CD4-positive, alpha-beta memory T cell (primary cell): ENCODE measurements at regions of chr7 and their contacts with region 1.

Region 1: GRCh38 chr7:87876040-87876868 is at the starts of genes DBF4 and SLC25A40:
- DNase-seq: peak; percentile 91 to 96 (median 95)
- H3K4me3 ChIP-seq: peak within 1 kb of the TSS; percentile 79 to 80
- H3K4me3 Mint-ChIP-seq: peak within 1 kb of the TSS; percentile 93 to 97 (median 95)
- H3K27ac ChIP-seq: peak within 1 kb of the TSS; percentile 91
- H3K27ac Mint-ChIP-seq: peak within 1 kb of the TSS; percentile 71 to 99 (median 97)
- H3K4me1 ChIP-seq: peaks cover 43% of the 10 kb centered on the region
- H3K4me1 Mint-ChIP-seq: peaks cover 37 to 58% (median 46%) of the 10 kb centered on the region in 4 donors
- H3K27me3 ChIP-seq: no peaks in the 10 kb centered on the region
- H3K27me3 Mint-ChIP-seq: no peaks in the 10 kb centered on the region
- total RNA-seq, gene DBF4: 25.3 to 29.0 TPM
- total RNA-seq, gene SLC25A40: 28.9 to 29.8 TPM

Region 2: GRCh38 chr7:87628780-87629569 is 247.3 kb before region 1 on chr7:
- CTCF ChIA-PET with region 1: no interaction called
- POLR2A ChIA-PET with region 1: no interaction called
- intact Hi-C with region 1: loop called (anchors 1 kb)
- DNase-seq: peak; percentile 17 to 51 (median 28)
- H3K4me3 ChIP-seq: peak overlapping the region in 1 of 2 donors; percentile 73
- H3K4me3 Mint-ChIP-seq: peak overlapping the region; percentile 75 to 93 (median 83)
- H3K27ac ChIP-seq: no peak overlapping the region
- H3K27ac Mint-ChIP-seq: peak overlapping the region in 4 of 7 donors; percentile 7 to 90 (median 41)
- H3K4me1 ChIP-seq: peaks cover 14% of the 10 kb centered on the region
- H3K4me1 Mint-ChIP-seq: peaks cover 7 to 16% (median 12%) of the 10 kb centered on the region in 4 donors
- H3K27me3 ChIP-seq: no peaks in the 10 kb centered on the region
- H3K27me3 Mint-ChIP-seq: peaks cover 6% of the 10 kb centered on the region in 2 donors

Region 3: DNA sequence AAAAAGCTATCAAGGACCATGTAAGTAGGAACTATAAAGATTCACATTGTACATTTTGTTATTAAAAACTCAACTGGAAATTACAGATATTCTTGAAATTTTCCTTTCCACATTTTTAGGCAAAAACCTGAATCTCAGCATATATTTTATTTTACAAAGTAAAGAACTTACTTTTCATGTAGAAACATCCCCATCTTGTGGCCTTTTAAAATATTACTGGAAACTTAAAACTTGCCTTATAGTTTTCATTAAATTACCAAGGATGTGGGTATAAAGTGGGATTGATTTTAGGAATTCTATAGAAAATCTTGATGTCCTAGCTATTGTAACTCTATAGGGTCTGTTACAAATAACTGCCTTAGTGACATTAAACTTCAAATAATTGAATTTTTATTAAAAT is 10.6 kb after region 1 on chr7:
- CTCF ChIA-PET with region 1: interaction called, 10 read pairs
- POLR2A ChIA-PET with region 1: no interaction called
- intact Hi-C with region 1: no loop called
- DNase-seq: peak in 4 of 5 donors; percentile 41 to 50 (median 44)
- H3K4me3 ChIP-seq: no peak overlapping the region
- H3K4me3 Mint-ChIP-seq: no peak overlapping the region
- H3K27ac ChIP-seq: no peak overlapping the region
- H3K27ac Mint-ChIP-seq: no peak overlapping the region
- H3K4me1 ChIP-seq: no peaks in the 10 kb centered on the region
- H3K4me1 Mint-ChIP-seq: peaks cover 0 to 14% (median 11%) of the 10 kb centered on the region in 4 donors
- H3K27me3 ChIP-seq: no peaks in the 10 kb centered on the region
- H3K27me3 Mint-ChIP-seq: no peaks in the 10 kb centered on the region

Region 4: DNA sequence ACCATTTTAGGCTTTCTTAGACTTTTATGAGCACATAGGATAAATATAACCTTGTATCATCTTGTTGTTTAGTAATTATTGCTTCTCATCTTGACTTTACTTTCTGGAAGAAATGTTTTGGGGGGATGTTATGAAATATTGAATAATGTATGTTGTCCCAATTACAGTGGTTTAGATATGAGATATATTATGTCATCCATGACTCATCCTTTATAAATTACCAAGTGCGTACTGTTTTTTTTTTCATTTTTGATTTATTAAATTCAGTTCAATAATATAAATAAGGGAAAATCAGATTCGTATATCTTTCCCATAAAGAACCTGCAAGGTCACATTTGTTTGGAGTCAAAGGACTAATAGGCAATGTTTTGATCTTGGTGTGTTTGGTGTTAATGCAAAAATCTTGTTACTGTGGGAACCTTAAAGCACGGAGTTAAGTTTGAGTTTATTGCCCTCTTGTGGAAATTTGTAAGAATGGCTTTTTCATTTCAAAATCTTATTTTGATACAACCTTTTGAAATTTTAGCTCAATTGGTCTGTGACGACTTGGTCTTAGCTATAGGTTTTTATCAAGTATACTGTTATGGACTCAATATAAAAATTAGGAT is 235.0 kb after region 1 on chr7:
- CTCF ChIA-PET with region 1: no interaction called
- POLR2A ChIA-PET with region 1: no interaction called
- intact Hi-C with region 1: loop called (anchors 5 kb)
- DNase-seq: peak in 4 of 5 donors; percentile 16 to 26 (median 24)
- H3K4me3 ChIP-seq: no peak overlapping the region
- H3K4me3 Mint-ChIP-seq: no peak overlapping the region
- H3K27ac ChIP-seq: no peak overlapping the region
- H3K27ac Mint-ChIP-seq: no peak overlapping the region
- H3K4me1 ChIP-seq: no peaks in the 10 kb centered on the region
- H3K4me1 Mint-ChIP-seq: peaks cover 0 to 1% (median 0%) of the 10 kb centered on the region in 4 donors
- H3K27me3 ChIP-seq: no peaks in the 10 kb centered on the region
- H3K27me3 Mint-ChIP-seq: no peaks in the 10 kb centered on the region

Region 5: GRCh38 chr7:88357294-88357693 is 481.0 kb after region 1 on chr7:
- CTCF ChIA-PET with region 1: no interaction called
- POLR2A ChIA-PET with region 1: no interaction called
- intact Hi-C with region 1: no loop called
- DNase-seq: no peak
- H3K4me3 ChIP-seq: no peak overlapping the region
- H3K4me3 Mint-ChIP-seq: no peak overlapping the region
- H3K27ac ChIP-seq: no peak overlapping the region
- H3K27ac Mint-ChIP-seq: no peak overlapping the region
- H3K4me1 ChIP-seq: no peaks in the 10 kb centered on the region
- H3K4me1 Mint-ChIP-seq: peaks cover 0 to 4% (median under 1%) of the 10 kb centered on the region in 4 donors
- H3K27me3 ChIP-seq: no peaks in the 10 kb centered on the region
- H3K27me3 Mint-ChIP-seq: no peaks in the 10 kb centered on the region

Region 6: GRCh38 chr7:89549768-89550167 is 1673.5 kb after region 1 on chr7:
- CTCF ChIA-PET with region 1: no interaction called
- POLR2A ChIA-PET with region 1: no interaction called
- intact Hi-C with region 1: no loop called
- DNase-seq: no peak
- H3K4me3 ChIP-seq: no peak overlapping the region
- H3K4me3 Mint-ChIP-seq: no peak overlapping the region
- H3K27ac ChIP-seq: no peak overlapping the region
- H3K27ac Mint-ChIP-seq: no peak overlapping the region
- H3K4me1 ChIP-seq: no peaks in the 10 kb centered on the region
- H3K4me1 Mint-ChIP-seq: no peaks in the 10 kb centered on the region
- H3K27me3 ChIP-seq: no peaks in the 10 kb centered on the region
- H3K27me3 Mint-ChIP-seq: no peaks in the 10 kb centered on the region